ENCODE measurements at regions of chr9 and their contacts with region 1.

Region 1: GRCh38 chr9:112793213-112793810 is 42.8 kb downstream of the SNX30 start:
- DNase-seq: peak; percentile 81
- H3K4me3 ChIP-seq: no peak overlapping the region
- H3K27ac ChIP-seq: no peak overlapping the region
- H3K4me1 ChIP-seq: peaks cover 0 to 54% (median 44%) of the 10 kb centered on the region in 4 donors
- H3K27me3 ChIP-seq: no peaks in the 10 kb centered on the region
- CTCF ChIP-seq: peak; percentile 45 to 76 (median 68)
- EP300 ChIP-seq: no peak
- POLR2A ChIP-seq: no peak

Region 2: GRCh38 chr9:112486221-112487007 is 306.9 kb before region 1 on chr9 and contains the start of gene KIAA1958:
- intact Hi-C with region 1: loop called (anchors 10 kb)
- DNase-seq: peak; percentile 89
- H3K4me3 ChIP-seq: peak within 1 kb of the TSS; percentile 72 to 95 (median 92)
- H3K27ac ChIP-seq: peak within 1 kb of the TSS; percentile 75 to 85 (median 80)
- H3K4me1 ChIP-seq: peaks cover 0 to 13% (median 8%) of the 10 kb centered on the region in 4 donors
- H3K27me3 ChIP-seq: no peaks in the 10 kb centered on the region
- CTCF ChIP-seq: no peak
- EP300 ChIP-seq: no peak
- POLR2A ChIP-seq: peak in 1 of 2 donors; percentile 32
- total RNA-seq, gene KIAA1958: 4.3 to 8.0 (median 5.1) TPM

Region 3: GRCh38 chr9:112665347-112665746 is 128.0 kb before region 1 on chr9:
- intact Hi-C with region 1: no loop called
- DNase-seq: no peak
- H3K4me3 ChIP-seq: no peak overlapping the region
- H3K27ac ChIP-seq: no peak overlapping the region
- H3K4me1 ChIP-seq: no peaks in the 10 kb centered on the region
- H3K27me3 ChIP-seq: no peaks in the 10 kb centered on the region
- CTCF ChIP-seq: no peak
- EP300 ChIP-seq: no peak
- POLR2A ChIP-seq: no peak

Region 4: DNA sequence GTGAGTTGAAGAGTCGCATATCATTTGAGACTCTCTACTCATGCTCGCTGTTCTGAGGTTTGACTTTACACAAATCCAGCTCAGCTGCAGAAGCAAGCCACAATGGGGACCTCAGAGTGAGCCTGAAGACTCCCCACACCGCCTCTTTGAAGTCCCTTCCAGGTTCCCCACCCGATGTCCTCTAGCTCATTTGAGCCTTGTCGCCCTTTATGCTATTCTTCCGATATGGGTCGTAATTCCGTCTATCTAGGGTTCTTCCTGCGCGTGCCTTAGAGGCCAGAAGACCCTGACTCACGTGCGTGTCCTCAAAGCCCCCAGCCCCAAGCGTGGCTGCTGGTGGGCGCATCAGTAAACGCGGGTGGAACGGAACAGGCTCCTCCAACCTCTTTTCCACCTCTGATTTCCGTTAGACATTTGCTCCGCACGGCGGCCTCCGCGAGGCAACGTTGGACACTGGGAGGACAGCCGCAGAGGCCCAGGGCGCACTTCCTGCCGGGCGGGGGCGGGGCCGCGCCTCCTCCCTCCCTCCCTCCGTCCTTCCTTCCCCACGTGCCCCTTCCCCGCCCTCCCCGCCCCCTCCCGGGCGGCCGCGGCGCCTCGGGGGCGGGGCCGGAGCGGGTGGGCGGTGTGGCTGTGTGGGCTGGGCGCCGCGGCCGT is 43.1 kb before region 1 on chr9 and contains the start of gene SNX30:
- intact Hi-C with region 1: loop called (anchors 2 kb)
- DNase-seq: peak; percentile 96
- H3K4me3 ChIP-seq: peak within 1 kb of the TSS; percentile 93 to 99 (median 97)
- H3K27ac ChIP-seq: peak within 1 kb of the TSS; percentile 82 to 90 (median 88)
- H3K4me1 ChIP-seq: peaks cover 0 to 48% (median 43%) of the 10 kb centered on the region in 4 donors
- H3K27me3 ChIP-seq: no peaks in the 10 kb centered on the region
- CTCF ChIP-seq: peak in 1 of 4 experiments; percentile 9
- EP300 ChIP-seq: no peak
- POLR2A ChIP-seq: peak; percentile 51 to 67
- total RNA-seq, gene SNX30: 6.4 to 10.0 (median 8.2) TPM